PC-9 (cell line): ENCODE measurements at regions of chr19 and their contacts with region 1.

Region 1: GRCh38 chr19:9140159-9140874 is at the start of gene ZNF317:
- DNase-seq: peak; percentile 82 to 87
- H3K4me3 ChIP-seq: peak within 1 kb of the TSS; percentile 85
- H3K27ac ChIP-seq: peak within 1 kb of the TSS; percentile 50
- H3K4me1 ChIP-seq: peaks cover 10% of the 10 kb centered on the region
- H3K27me3 ChIP-seq: no peaks in the 10 kb centered on the region
- CTCF ChIP-seq: no peak
- total RNA-seq, gene ZNF317: 25.5 and 28.2 TPM in 2 replicates

Region 2: DNA sequence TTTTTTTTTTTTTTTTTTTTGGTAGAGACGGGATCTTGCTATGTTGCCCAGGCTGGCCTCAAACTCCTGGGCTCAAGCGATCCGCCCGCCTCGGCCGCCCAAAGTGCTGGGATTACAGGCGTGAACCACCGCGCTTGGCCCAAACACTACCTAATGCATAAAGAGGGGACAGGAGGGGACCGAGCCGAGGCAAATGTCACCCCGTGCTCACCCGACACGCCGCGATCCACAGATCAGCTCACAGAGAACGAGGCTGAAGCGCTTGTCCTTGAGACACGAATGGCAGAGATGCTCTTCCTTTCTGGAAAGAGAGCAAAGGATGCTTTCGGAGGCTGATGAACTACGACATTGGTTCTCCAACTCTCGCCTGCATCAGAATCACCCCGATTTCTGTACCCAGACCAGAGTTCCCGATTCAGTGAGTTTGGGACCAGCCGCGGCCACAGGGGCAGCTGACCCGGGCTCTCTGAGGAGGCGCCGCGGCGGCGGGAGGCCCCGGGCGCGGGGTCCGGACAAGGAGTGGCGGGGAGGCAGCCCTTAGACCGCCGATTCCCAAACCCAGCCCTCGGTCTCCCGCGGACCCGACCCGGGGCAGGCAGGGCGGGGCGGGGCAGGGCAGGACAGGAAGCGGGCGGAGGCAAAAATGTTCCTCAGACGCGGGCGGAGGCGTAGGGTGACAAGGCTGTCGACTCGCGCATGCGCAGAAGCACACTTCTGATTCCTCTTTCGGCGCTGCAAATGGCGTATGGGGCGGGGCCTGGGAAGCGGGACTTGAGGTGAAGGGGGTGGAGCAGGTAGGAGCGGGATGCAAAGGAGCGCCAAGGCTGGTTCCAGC is 169.0 kb after region 1 on chr19 and contains the start of gene ZNF699:
- CTCF ChIA-PET with region 1: no interaction called
- POLR2A ChIA-PET with region 1: no interaction called
- intact Hi-C with region 1: loop called (anchors 2 kb)
- DNase-seq: peak; percentile 96
- H3K4me3 ChIP-seq: peak within 1 kb of the TSS; percentile 64
- H3K27ac ChIP-seq: peak within 1 kb of the TSS; percentile 14; the same call in 1 of the 2 replicates
- H3K4me1 ChIP-seq: peaks cover 9% of the 10 kb centered on the region; the same call in 1 of the 2 replicates
- H3K27me3 ChIP-seq: no peaks in the 10 kb centered on the region
- CTCF ChIP-seq: no peak
- total RNA-seq, gene ZNF699: 2.2 and 2.6 TPM in 2 replicates

Region 3: DNA sequence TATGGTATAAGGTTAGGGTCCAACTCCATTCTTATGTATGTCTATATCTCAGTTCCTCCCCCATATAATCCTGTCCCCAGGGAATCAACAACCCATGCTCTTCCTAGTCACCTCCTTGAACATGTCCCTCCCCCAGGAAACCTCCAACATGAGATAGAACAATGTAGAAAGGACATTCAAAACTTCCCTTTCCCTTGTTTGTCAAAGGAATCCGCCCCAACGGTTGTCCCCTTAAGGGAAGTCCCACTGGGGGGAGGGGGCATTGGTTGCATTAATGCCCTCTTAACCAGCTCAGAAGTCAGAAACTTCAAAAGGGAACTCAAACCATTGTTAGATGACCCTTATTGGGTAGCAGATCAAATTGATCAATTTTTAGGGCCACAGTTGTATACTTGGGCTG is 487.5 kb after region 1 on chr19:
- CTCF ChIA-PET with region 1: no interaction called
- POLR2A ChIA-PET with region 1: no interaction called
- intact Hi-C with region 1: loop called (anchors 5 kb)
- DNase-seq: no peak
- H3K4me3 ChIP-seq: no peak overlapping the region
- H3K27ac ChIP-seq: no peak overlapping the region
- H3K4me1 ChIP-seq: no peaks in the 10 kb centered on the region
- H3K27me3 ChIP-seq: no peaks in the 10 kb centered on the region
- CTCF ChIP-seq: no peak

Region 4: DNA sequence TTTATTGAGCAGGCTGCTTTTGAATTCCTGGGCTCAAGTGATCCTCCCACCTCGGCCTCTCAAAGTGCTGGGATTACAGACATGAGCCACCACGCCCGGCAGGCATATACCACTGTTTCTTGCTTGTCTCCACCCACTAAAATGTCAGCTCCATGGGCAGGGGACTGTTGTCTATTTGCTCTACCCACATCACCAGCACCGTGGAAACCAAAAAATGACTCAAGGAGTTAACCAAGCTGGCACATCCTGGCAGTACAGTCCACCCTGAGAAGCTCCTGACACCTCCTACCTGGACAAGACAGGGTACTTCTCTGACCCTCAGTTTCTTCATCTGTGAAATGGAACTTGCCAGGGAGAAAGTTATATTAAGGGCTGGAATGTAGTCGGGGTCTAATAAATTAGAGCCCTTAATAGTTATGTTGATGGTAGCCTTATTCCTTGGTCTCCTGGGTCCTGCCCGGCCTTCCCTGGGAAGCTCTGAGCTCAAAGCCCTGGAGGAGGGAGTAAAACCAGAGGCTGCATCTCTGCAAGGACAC is 886.9 kb after region 1 on chr19:
- CTCF ChIA-PET with region 1: no interaction called
- POLR2A ChIA-PET with region 1: no interaction called
- intact Hi-C with region 1: loop called (anchors 5 kb)
- DNase-seq: peak in 1 of 2 experiments; percentile 43
- H3K4me3 ChIP-seq: no peak overlapping the region
- H3K27ac ChIP-seq: no peak overlapping the region
- H3K4me1 ChIP-seq: peaks cover 3% of the 10 kb centered on the region; the same call in 1 of the 2 replicates
- H3K27me3 ChIP-seq: peaks cover 88% of the 10 kb centered on the region
- CTCF ChIP-seq: no peak